Pancreas (tissue), 10 donors: ENCODE measurements at regions of chr2 and their contacts with region 1.

Region 1: DNA sequence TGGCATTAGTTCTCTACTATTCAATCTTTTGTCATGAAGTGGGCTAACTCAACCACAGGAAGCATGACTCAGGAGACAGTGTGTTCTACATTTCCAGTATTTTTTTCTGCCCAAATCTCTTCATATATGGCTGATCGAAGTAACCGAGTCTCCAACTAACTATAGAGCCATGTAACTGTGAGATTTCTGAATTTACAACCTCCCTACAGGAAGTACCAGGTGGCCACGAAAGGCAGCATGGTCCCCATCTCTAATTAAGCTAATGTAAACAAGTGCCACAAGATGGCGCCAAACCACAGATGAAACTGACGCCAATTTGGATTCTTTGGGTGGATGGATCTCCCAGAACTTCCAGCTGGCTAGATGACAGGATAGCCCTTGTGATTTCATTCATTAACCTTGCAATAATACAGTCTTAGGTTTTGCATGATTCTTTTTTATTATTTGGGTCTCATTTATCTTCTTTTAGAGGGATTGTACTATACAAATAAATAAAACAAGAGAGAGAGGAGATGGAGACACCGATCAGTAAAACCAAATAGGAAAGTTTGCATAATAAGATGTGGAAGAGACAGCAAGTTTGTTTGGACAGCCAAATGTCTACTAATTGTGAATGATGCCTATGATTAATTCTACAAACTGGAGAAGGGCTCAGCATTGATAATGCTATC is 18.3 kb upstream of the ARHGAP15 start:
- DNase-seq: peak in 5 of 6 donors; percentile 12 to 50 (median 32)
- ATAC-seq: peak; percentile 50 to 81 (median 74)
- H3K4me3 ChIP-seq: no peak overlapping the region
- H3K27ac ChIP-seq: no peak overlapping the region
- H3K4me1 ChIP-seq: no peaks in the 10 kb centered on the region
- H3K27me3 ChIP-seq: no peaks in the 10 kb centered on the region
- CTCF ChIP-seq: peak in 3 of 4 donors; percentile 12 to 56 (median 40)

Region 2: DNA sequence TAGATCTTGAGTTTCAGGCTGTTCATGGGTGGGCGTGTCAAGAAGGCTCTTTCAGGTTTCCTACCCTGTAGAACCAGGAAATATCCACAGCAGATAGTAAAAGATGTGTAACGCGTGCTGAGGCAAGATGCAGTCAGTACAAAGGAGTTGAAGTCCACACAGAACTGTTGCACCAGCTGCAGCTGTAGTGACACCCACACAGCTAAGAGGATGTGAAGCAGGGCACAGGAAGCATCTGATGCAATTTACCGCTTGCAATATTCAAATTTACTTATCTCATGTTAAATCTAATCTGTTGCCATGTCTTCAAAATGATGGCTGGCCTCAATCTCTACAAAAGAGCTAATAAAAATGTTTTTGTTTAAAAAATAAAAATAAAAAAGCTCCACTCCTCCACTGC is 151.1 kb after region 1 on chr2:
- intact Hi-C with region 1: loop called in 1 of 3 experiments (anchors 5 kb)
- DNase-seq: no peak
- ATAC-seq: peak in 2 of 4 donors; percentile 20 to 58
- H3K4me3 ChIP-seq: no peak overlapping the region
- H3K27ac ChIP-seq: no peak overlapping the region
- H3K4me1 ChIP-seq: no peaks in the 10 kb centered on the region
- H3K27me3 ChIP-seq: no peaks in the 10 kb centered on the region
- CTCF ChIP-seq: no peak

Region 3: DNA sequence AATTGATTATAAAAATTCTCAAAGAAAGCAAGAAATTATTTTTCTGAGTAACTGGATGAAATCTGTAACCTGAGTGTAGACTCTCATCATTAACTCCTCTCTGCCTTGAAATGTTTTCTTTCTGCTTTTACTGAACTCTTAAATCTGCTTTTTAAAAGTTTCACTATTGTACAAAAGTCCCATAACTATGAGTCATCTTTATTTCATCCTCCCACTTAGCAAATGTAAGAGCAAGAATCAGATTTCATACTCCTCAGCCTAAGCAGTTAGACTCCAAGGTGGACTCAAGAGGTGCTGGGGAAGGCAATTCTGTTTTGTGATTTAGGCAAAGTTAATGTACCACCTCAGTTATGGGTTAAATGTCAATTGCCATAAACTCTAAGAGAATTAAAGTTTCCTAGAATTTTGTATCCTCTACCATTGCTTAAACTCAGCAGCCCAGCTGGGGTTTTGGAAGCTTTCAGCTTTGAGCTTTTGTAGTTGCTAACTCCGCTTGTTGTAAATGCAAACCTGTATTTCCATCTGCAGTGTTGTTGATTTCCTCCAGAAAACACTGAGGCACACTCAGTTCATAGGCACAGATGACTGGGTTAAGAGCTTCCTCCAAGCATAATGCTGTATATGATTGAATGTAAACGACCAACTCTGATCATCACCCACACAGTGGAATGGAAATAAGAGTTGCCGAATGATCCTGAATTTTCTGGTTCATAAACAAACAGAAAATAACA is 287.2 kb after region 1 on chr2:
- intact Hi-C with region 1: no loop called
- DNase-seq: no peak
- ATAC-seq: no peak
- H3K4me3 ChIP-seq: no peak overlapping the region
- H3K27ac ChIP-seq: no peak overlapping the region
- H3K4me1 ChIP-seq: no peaks in the 10 kb centered on the region
- H3K27me3 ChIP-seq: no peaks in the 10 kb centered on the region
- CTCF ChIP-seq: no peak

Region 4: GRCh38 chr2:143607231-143608062 is 496.6 kb after region 1 on chr2:
- intact Hi-C with region 1: no loop called
- DNase-seq: no peak
- ATAC-seq: no peak
- H3K4me3 ChIP-seq: no peak overlapping the region
- H3K27ac ChIP-seq: no peak overlapping the region
- H3K4me1 ChIP-seq: peaks cover 0 to 3% (median 0%) of the 10 kb centered on the region in 3 donors
- H3K27me3 ChIP-seq: peaks cover 0 to 4% (median 0%) of the 10 kb centered on the region in 4 donors
- CTCF ChIP-seq: no peak